ENCODE measurements at regions of chrX and their contacts with region 1.

Region 1: GRCh38 chrX:101931488-101932248 is at the start of gene ZMAT1:
- DNase-seq: peak; percentile 77 to 82
- H3K4me3 ChIP-seq: peak within 1 kb of the TSS; percentile 39 to 77 (median 58)
- H3K27ac ChIP-seq: peak within 1 kb of the TSS; percentile 58; the same call in 1 of the 2 replicates
- H3K4me1 ChIP-seq: peaks cover 0 to 5% (median 0%) of the 10 kb centered on the region in 4 experiments; a peak in 1 of 7 replicates
- H3K27me3 ChIP-seq: peaks cover 0 to 9% (median under 1%) of the 10 kb centered on the region in 4 experiments; a peak in 2 of 7 replicates
- CTCF ChIP-seq: no peak
- EP300 ChIP-seq: no peak
- POLR2A ChIP-seq: peak; percentile 82 to 87
- RAD21 ChIP-seq: no peak
- total RNA-seq, gene ZMAT1: 0.94 and 1.4 TPM in 2 replicates

Region 2: DNA sequence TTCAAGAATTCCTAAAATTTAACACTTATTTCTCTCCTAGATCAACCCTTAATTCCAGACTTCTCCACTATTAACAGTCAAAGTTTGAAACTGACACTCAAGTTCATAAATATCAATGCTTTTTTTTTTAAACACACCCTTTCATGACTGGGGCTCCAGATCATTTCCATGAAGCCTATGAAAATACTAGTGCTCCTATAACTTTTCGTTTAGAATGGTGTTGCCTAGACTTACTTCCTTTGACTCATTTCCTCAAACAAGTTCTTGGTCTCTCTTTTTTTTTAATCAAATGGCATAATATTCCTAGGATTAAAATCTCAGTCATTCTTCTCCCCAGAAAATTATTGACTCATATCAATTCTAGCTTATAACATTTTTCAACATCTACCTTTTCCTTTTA is 12.9 kb before region 1 on chrX:
- CTCF ChIA-PET with region 1: no interaction called
- POLR2A ChIA-PET with region 1: interaction called, 10 read pairs
- DNase-seq: no peak
- H3K4me3 ChIP-seq: no peak overlapping the region
- H3K27ac ChIP-seq: no peak overlapping the region
- H3K4me1 ChIP-seq: no peaks in the 10 kb centered on the region
- H3K27me3 ChIP-seq: no peaks in the 10 kb centered on the region
- CTCF ChIP-seq: no peak
- EP300 ChIP-seq: no peak
- POLR2A ChIP-seq: no peak
- RAD21 ChIP-seq: no peak

Measured in H1 (cell line).